ENCODE measurements at regions of chr10 and their contacts with region 1.

Region 1: GRCh38 chr10:68156373-68157185 is 47.3 kb downstream of the MYPN start:
- DNase-seq: no peak

Region 2: DNA sequence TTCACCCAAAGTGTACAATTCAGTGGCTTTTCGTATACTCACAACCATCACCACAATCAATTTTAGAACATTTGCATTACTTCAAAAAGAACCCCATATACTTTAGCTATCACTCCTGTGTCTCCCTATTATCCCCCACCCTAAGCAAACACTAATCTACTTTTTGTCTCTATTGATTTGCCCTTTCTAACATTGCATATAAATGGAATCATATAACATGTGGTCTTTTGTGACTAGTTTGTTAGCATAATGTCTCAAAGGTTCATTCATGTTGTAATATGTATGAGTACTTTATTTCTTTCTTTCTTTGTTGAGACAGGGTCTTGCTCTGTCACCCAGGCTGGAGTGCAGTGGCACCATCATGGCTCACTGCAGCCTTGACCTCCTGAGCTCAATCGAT is 297.6 kb before region 1 on chr10:
- intact Hi-C with region 1: loop called in 1 of 2 experiments (anchors 5 kb)
- DNase-seq: no peak

Region 3: GRCh38 chr10:68082872-68083271 is 73.7 kb before region 1 on chr10:
- intact Hi-C with region 1: loop called (anchors 2 to 10 kb)
- DNase-seq: no peak

Region 4: GRCh38 chr10:68471586-68472408 is 315.2 kb after region 1 on chr10 and contains the start of gene DNA2:
- intact Hi-C with region 1: no loop called
- DNase-seq: peak; percentile 81
- total RNA-seq, gene DNA2: 1.7 to 2.0 TPM

Measured in posterior vena cava (tissue), 2 donors.